Activated naive CD4-positive, alpha-beta T cell treated with anti-CD3 and anti-CD28 coated beads for 36 hours (primary cell): ENCODE measurements at regions of chr3 and their contacts with region 1.

Region 1: GRCh38 chr3:183122257-183122932 is 23.1 kb upstream of the MCCC1 start:
- DNase-seq: no peak
- H3K4me3 Mint-ChIP-seq: no peak overlapping the region
- H3K27ac Mint-ChIP-seq: no peak overlapping the region
- H3K4me1 Mint-ChIP-seq: peaks cover 5% of the 10 kb centered on the region
- H3K27me3 Mint-ChIP-seq: peaks cover 4% of the 10 kb centered on the region

Region 2: GRCh38 chr3:182501856-182502255 is 620.5 kb before region 1 on chr3:
- CTCF ChIA-PET with region 1: interaction called, 12 read pairs
- intact Hi-C with region 1: no loop called
- DNase-seq: no peak
- H3K4me3 Mint-ChIP-seq: no peak overlapping the region
- H3K27ac Mint-ChIP-seq: no peak overlapping the region
- H3K4me1 Mint-ChIP-seq: no peaks in the 10 kb centered on the region
- H3K27me3 Mint-ChIP-seq: no peaks in the 10 kb centered on the region

Region 3: DNA sequence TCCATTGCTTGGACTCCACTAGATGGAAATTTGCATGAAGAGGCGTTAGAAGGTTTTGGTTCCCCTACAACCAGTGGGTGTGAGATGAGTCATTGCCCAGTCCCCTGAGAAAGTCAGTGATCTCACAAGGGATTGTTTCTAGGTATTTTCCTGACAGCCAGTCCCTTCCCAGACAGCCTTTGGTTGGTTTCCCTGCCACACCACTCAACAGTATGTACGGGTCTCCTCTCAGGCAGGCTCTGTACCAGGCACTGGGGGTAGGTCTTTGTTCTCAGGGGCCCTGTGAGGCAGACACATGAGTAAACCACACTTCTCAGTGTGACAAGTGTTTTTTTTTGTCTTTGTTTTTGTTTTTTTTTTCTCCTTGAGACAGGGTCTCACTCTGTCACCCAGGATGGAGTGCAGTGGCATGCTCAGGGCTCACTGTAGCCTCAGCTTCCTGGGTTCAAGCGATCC is 36.2 kb after region 1 on chr3:
- CTCF ChIA-PET with region 1: interaction called, 8 read pairs
- intact Hi-C with region 1: loop called (anchors 1 kb)
- DNase-seq: peak; percentile 80
- H3K4me3 Mint-ChIP-seq: peak overlapping the region; percentile 19
- H3K27ac Mint-ChIP-seq: peak overlapping the region; percentile 74
- H3K4me1 Mint-ChIP-seq: peaks cover 41% of the 10 kb centered on the region
- H3K27me3 Mint-ChIP-seq: no peaks in the 10 kb centered on the region

Region 4: DNA sequence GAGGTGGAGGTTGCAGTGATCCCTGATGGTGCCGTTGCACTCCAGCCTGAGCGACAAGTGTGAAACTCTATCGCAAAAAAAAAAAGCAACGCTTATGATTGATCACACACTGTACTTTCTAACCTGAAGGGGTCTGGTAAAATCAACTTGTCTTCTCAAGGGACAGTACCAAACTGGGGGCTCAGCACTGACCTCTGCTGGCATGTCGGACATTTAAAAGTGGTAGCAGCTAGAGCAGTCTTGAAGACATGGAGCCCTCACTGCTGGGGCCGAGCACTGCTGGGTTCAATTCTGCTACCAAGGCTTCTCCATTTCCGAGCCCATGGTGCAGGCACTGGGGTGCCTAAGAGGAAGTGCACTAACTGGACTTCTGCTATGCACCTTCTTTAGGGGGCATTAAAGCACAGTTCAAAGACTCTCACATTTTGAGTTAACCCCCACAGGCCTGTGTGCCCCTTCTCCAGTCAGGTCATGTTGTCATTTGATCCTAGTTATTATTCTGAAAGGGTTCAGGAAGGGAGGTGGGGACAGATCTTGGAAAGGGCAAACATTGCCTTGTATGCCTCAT is 66.6 kb after region 1 on chr3:
- CTCF ChIA-PET with region 1: interaction called, 86 read pairs
- intact Hi-C with region 1: loop called (anchors 1 kb)
- DNase-seq: peak; percentile 47
- H3K4me3 Mint-ChIP-seq: no peak overlapping the region
- H3K27ac Mint-ChIP-seq: no peak overlapping the region
- H3K4me1 Mint-ChIP-seq: peaks cover 27% of the 10 kb centered on the region
- H3K27me3 Mint-ChIP-seq: no peaks in the 10 kb centered on the region

Region 5: GRCh38 chr3:183377307-183377959 is 255.0 kb after region 1 on chr3:
- CTCF ChIA-PET with region 1: interaction called, 89 read pairs
- intact Hi-C with region 1: loop called (anchors 1 kb)
- DNase-seq: no peak
- H3K4me3 Mint-ChIP-seq: no peak overlapping the region
- H3K27ac Mint-ChIP-seq: no peak overlapping the region
- H3K4me1 Mint-ChIP-seq: peaks cover 21% of the 10 kb centered on the region
- H3K27me3 Mint-ChIP-seq: no peaks in the 10 kb centered on the region

Region 6: GRCh38 chr3:183766745-183767606 is 644.6 kb after region 1 on chr3:
- CTCF ChIA-PET with region 1: no interaction called
- intact Hi-C with region 1: loop called (anchors 10 kb)
- DNase-seq: peak; percentile 89
- H3K4me3 Mint-ChIP-seq: no peak overlapping the region
- H3K27ac Mint-ChIP-seq: no peak overlapping the region
- H3K4me1 Mint-ChIP-seq: peaks cover 11% of the 10 kb centered on the region
- H3K27me3 Mint-ChIP-seq: no peaks in the 10 kb centered on the region